ENCODE measurements at regions of chr2 and their contacts with region 1.

Region 1: GRCh38 chr2:233404222-233404621 is 49.9 kb downstream of the DGKD start:
- DNase-seq: peak; percentile 85
- H3K4me3 Mint-ChIP-seq: no peak overlapping the region
- H3K27ac Mint-ChIP-seq: peak overlapping the region; percentile 75
- H3K4me1 Mint-ChIP-seq: peaks cover 58% of the 10 kb centered on the region
- H3K27me3 Mint-ChIP-seq: no peaks in the 10 kb centered on the region

Region 2: DNA sequence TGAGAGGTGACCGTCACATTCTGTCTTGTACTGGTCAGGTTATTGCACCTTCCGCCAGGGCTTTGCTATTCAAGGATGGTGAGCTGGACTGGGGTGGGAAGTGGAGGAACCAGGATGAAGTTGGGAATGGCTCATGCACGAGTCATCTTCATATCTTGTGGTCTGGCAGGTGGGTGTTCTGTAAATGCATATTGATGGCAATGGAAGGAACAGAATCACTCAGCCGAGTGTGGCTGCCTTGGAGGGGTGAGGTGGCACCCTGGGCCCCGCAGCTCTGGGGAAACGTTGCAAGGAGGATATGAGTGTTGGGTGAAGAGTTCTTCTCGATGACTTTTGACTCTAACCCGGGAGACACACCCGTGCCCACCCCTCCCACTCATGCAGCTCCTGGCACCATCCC is 370.6 kb before region 1 on chr2:
- CTCF ChIA-PET with region 1: no interaction called
- intact Hi-C with region 1: no loop called
- DNase-seq: no peak
- H3K4me3 Mint-ChIP-seq: no peak overlapping the region
- H3K27ac Mint-ChIP-seq: no peak overlapping the region
- H3K4me1 Mint-ChIP-seq: no peaks in the 10 kb centered on the region
- H3K27me3 Mint-ChIP-seq: no peaks in the 10 kb centered on the region

Region 3: GRCh38 chr2:233114421-233114861 is 289.8 kb before region 1 on chr2:
- CTCF ChIA-PET with region 1: no interaction called
- intact Hi-C with region 1: no loop called
- DNase-seq: peak; percentile 13
- H3K4me3 Mint-ChIP-seq: no peak overlapping the region
- H3K27ac Mint-ChIP-seq: peak overlapping the region; percentile 46
- H3K4me1 Mint-ChIP-seq: peaks cover 65% of the 10 kb centered on the region
- H3K27me3 Mint-ChIP-seq: no peaks in the 10 kb centered on the region

Region 4: DNA sequence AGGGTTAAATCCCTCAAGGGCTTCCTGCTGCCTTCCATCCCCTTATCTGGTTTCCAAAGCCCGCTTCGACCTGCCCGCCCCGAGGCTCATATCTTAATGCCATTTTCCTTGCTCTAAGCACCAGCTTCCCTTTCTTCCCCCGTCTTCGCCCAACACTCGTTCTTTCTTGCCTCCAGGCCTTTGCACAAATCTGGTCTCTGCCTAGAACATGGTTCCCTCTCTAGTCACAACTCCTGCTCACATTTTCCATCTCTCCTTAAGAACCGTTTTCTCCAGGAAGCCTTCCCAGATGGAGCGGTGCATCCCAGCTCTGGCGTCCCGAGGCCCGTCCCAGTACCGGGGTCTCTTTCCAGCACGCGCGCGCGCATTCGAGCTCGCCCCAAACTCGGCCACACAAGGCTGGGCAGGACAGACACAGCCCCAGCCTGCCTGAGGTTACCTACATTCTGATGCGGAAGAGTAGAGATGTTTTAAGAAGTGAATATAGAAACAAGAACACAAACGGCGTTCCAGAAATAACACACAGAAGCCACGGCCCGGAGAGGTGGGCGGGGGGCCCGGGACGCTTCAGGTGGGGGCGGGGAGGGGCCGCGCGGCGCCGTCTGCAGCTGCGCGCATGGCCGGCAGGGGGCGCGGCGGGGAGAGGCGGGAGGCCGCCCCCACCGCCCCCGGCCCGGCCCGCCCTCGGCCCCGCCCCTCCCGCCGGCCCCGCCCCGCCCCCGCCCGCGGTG is 50.3 kb before region 1 on chr2 and contains the start of gene DGKD:
- CTCF ChIA-PET with region 1: interaction called, 5 read pairs
- intact Hi-C with region 1: loop called (anchors 5 kb)
- DNase-seq: peak; percentile 71
- H3K4me3 Mint-ChIP-seq: peak within 1 kb of the TSS; percentile 87
- H3K27ac Mint-ChIP-seq: peak within 1 kb of the TSS; percentile 70
- H3K4me1 Mint-ChIP-seq: peaks cover 63% of the 10 kb centered on the region
- H3K27me3 Mint-ChIP-seq: no peaks in the 10 kb centered on the region
- total RNA-seq, gene DGKD: 68.9 to 72.3 TPM

Region 5: GRCh38 chr2:233426619-233427342 is 22.6 kb after region 1 on chr2:
- CTCF ChIA-PET with region 1: interaction called, 11 read pairs
- intact Hi-C with region 1: no loop called
- DNase-seq: peak; percentile 85
- H3K4me3 Mint-ChIP-seq: no peak overlapping the region
- H3K27ac Mint-ChIP-seq: peak overlapping the region; percentile 7
- H3K4me1 Mint-ChIP-seq: peaks cover 83% of the 10 kb centered on the region
- H3K27me3 Mint-ChIP-seq: no peaks in the 10 kb centered on the region

Region 6: DNA sequence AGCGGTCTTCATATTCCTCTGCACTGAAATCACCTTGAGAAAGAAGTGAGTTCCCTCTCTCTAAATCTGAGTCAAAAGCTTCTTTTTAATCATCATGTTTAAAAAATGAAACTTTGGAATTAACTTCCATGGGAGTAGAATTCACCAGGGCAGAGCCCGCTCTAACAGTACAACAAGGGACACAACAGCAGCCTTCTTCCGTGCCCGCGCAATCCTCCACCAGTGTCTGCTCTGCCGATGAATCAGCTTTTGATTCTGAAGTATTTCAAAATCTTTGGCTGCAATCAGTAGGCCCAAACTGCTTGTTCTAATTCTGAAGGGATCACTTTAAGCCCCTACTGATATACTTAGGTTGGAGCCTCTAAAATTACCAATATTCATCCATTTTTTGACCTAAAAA is 85.4 kb after region 1 on chr2:
- CTCF ChIA-PET with region 1: interaction called, 10 read pairs
- intact Hi-C with region 1: no loop called
- DNase-seq: no peak
- H3K4me3 Mint-ChIP-seq: no peak overlapping the region
- H3K27ac Mint-ChIP-seq: no peak overlapping the region
- H3K4me1 Mint-ChIP-seq: no peaks in the 10 kb centered on the region
- H3K27me3 Mint-ChIP-seq: no peaks in the 10 kb centered on the region

Region 7: GRCh38 chr2:233531888-233532458 is 127.8 kb after region 1 on chr2:
- CTCF ChIA-PET with region 1: no interaction called
- intact Hi-C with region 1: no loop called
- DNase-seq: no peak
- H3K4me3 Mint-ChIP-seq: no peak overlapping the region
- H3K27ac Mint-ChIP-seq: no peak overlapping the region
- H3K4me1 Mint-ChIP-seq: no peaks in the 10 kb centered on the region
- H3K27me3 Mint-ChIP-seq: no peaks in the 10 kb centered on the region

Measured in activated naive CD4-positive, alpha-beta T cell treated with anti-CD3 and anti-CD28 coated beads for 36 hours (primary cell).